Uterus (tissue), 4 donors: ENCODE measurements at regions of chr1 and their contacts with region 1.

Region 1: DNA sequence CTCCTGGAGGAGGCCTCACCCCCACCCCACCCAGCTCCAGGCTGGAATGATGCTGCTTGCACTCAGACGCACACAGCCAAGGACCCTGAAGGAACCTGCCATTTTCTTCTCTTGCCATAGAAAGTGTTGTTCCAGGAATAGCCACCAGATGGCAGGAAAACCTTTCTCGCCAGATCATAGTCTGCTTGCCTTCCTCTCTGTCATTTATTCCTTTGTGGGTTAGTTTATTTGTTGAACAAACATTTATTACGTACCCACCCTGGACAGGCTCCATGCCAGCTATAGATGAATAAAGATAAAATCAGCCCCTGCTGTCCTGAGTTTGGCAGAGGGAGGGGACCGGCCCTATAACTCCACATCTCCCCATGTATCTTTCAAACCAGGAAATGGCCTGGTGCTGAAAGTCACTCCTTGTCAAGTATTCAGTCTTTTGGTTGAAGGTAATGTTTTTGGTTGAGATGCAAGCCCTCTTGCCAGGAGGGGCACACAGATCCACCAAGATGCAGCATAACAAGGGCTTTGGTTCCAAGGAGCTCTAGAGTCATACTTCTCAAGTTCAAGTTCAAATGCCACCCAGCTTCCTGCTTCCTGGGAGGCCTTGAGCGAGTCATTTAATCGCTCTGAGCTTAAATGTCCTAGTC is 7.0 kb upstream of the KCNC4 start:
- DNase-seq: peak; percentile 34 to 59
- H3K4me3 ChIP-seq: no peak overlapping the region
- H3K27ac ChIP-seq: no peak overlapping the region
- H3K4me1 ChIP-seq: no peaks in the 10 kb centered on the region
- H3K27me3 ChIP-seq: no peaks in the 10 kb centered on the region
- CTCF ChIP-seq: peak; percentile 77 to 88 (median 80)
- POLR2A ChIP-seq: no peak

Region 2: DNA sequence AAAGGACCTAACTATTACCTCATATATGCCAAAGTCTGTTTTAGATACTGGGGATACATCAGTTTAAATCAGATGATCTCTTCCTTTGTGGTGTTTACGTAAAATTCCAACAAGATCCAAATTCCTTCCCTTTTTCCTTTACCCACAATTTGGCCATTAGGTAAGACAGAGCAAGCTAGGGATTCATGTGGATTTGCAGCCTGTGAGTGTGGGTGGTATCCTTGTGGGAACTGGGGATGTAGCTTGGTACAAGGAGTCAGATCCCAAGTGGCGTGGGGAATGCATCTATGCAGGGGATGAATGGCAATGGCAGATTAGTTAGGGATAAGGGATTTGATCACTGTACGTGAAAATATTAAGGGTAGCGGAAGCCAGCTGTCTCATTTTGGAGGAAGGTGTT is 178.5 kb before region 1 on chr1:
- intact Hi-C with region 1: no loop called
- DNase-seq: no peak
- H3K4me3 ChIP-seq: no peak overlapping the region
- H3K27ac ChIP-seq: no peak overlapping the region
- H3K4me1 ChIP-seq: no peaks in the 10 kb centered on the region
- H3K27me3 ChIP-seq: no peaks in the 10 kb centered on the region
- CTCF ChIP-seq: no peak
- POLR2A ChIP-seq: no peak

Region 3: GRCh38 chr1:110102081-110102480 is 101.1 kb before region 1 on chr1:
- intact Hi-C with region 1: no loop called
- DNase-seq: no peak
- H3K4me3 ChIP-seq: no peak overlapping the region
- H3K27ac ChIP-seq: no peak overlapping the region
- H3K4me1 ChIP-seq: no peaks in the 10 kb centered on the region
- H3K27me3 ChIP-seq: no peaks in the 10 kb centered on the region
- CTCF ChIP-seq: no peak
- POLR2A ChIP-seq: no peak

Region 4: GRCh38 chr1:110338886-110339406 is 135.8 kb after region 1 on chr1 and contains the start of gene RBM15:
- intact Hi-C with region 1: no loop called
- DNase-seq: peak; percentile 98 to 99
- H3K4me3 ChIP-seq: peak within 1 kb of the TSS; percentile 97 to 100
- H3K27ac ChIP-seq: peak within 1 kb of the TSS; percentile 99
- H3K4me1 ChIP-seq: peaks cover 7 to 11% of the 10 kb centered on the region in 2 donors
- H3K27me3 ChIP-seq: no peaks in the 10 kb centered on the region
- CTCF ChIP-seq: peak in 1 of 4 experiments; percentile 10
- POLR2A ChIP-seq: no peak
- total RNA-seq, gene RBM15: 9.2 to 71.1 (median 20.8) TPM

Region 5: DNA sequence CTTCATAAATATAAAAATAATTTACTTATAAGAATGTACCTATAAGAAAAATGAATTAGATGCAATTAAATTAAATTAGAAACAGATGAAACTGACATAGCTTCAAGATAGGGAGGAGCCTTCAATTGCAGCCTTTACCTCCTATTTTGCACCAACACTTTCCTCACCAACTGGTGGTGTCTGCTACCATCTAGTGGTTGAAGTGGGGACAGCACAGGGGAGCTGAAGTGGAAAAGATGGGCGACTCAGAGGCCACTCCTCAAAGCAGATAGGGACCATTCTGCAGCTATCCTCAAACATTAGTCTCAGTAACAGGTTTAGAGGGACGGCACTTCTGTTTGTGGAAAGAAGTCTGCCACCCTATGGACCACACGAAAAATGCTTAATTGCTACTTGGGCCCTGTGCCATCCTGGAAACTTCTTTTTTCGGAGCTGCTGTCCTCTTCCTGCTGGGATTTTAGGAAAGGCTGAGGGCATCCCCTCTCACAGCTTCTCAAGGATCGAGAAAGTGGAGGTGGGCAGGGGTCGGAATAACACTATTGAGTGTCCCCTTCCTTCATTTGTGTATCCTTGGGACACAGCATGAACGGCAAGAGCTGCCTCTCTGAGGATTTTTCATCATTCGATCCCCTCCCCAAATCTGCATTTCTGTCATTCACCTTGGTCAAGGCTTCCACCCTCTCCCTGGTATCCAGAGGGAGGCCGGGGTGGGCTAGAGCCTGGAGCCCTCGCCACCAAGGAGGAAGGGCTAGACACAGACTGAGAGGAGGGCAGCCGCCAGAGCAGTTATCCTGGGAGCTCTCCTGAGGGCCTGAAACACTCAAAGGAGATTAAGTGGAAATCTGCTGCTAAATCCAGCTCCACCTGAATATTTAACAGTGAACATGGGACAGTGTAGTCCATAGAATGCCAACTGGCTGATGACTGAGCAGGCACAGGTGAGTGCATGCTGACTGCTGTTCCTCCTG is 257.4 kb after region 1 on chr1:
- intact Hi-C with region 1: loop called (anchors 5 kb)
- DNase-seq: peak; percentile 73 to 78
- H3K4me3 ChIP-seq: no peak overlapping the region
- H3K27ac ChIP-seq: no peak overlapping the region
- H3K4me1 ChIP-seq: no peaks in the 10 kb centered on the region
- H3K27me3 ChIP-seq: no peaks in the 10 kb centered on the region
- CTCF ChIP-seq: peak; percentile 91 to 96 (median 93)
- POLR2A ChIP-seq: no peak

Region 6: GRCh38 chr1:110824192-110824591 is 621.1 kb after region 1 on chr1:
- intact Hi-C with region 1: no loop called
- DNase-seq: no peak
- H3K4me3 ChIP-seq: no peak overlapping the region
- H3K27ac ChIP-seq: no peak overlapping the region
- H3K4me1 ChIP-seq: no peaks in the 10 kb centered on the region
- H3K27me3 ChIP-seq: no peaks in the 10 kb centered on the region
- CTCF ChIP-seq: no peak
- POLR2A ChIP-seq: no peak